OCI-LY7 (cell line): ENCODE measurements at regions of chr5 and their contacts with region 1.

Region 1: GRCh38 chr5:152560512-152561137 is 155.5 kb upstream of the NMUR2 start:
- DNase-seq: peak; percentile 46
- H3K4me3 ChIP-seq: no peak overlapping the region
- H3K27ac ChIP-seq: no peak overlapping the region
- H3K4me1 ChIP-seq: no peaks in the 10 kb centered on the region
- CTCF ChIP-seq: peak; percentile 86

Region 2: GRCh38 chr5:153159611-153160010 is 599.0 kb after region 1 on chr5:
- CTCF ChIA-PET with region 1: no interaction called
- POLR2A ChIA-PET with region 1: no interaction called
- intact Hi-C with region 1: loop called (anchors 10 kb)
- DNase-seq: no peak
- H3K4me3 ChIP-seq: no peak overlapping the region
- H3K27ac ChIP-seq: no peak overlapping the region
- H3K4me1 ChIP-seq: no peaks in the 10 kb centered on the region
- CTCF ChIP-seq: no peak